Caco-2 (cell line): ENCODE measurements at regions of chr10 and their contacts with region 1.

Region 1: GRCh38 chr10:97334370-97335175 is at the start of gene FRAT2:
- DNase-seq: peak; percentile 91 to 93
- H3K4me3 ChIP-seq: peak within 1 kb of the TSS; percentile 99
- H3K4me3 Mint-ChIP-seq: peak within 1 kb of the TSS; percentile 78
- H3K27ac Mint-ChIP-seq: peak within 1 kb of the TSS; percentile 92
- H3K4me1 ChIP-seq: peaks cover 21% of the 10 kb centered on the region
- H3K4me1 Mint-ChIP-seq: peaks cover 27% of the 10 kb centered on the region
- H3K27me3 ChIP-seq: no peaks in the 10 kb centered on the region
- H3K27me3 Mint-ChIP-seq: no peaks in the 10 kb centered on the region
- CTCF ChIP-seq: no peak
- total RNA-seq, gene FRAT2: 16.6 and 18.8 TPM in 2 replicates

Region 2: GRCh38 chr10:97255512-97256293 is 78.9 kb before region 1 on chr10:
- CTCF ChIA-PET with region 1: no interaction called
- POLR2A ChIA-PET with region 1: no interaction called
- intact Hi-C with region 1: no loop called
- DNase-seq: no peak
- H3K4me3 ChIP-seq: no peak overlapping the region
- H3K4me3 Mint-ChIP-seq: no peak overlapping the region
- H3K27ac Mint-ChIP-seq: no peak overlapping the region
- H3K4me1 ChIP-seq: peaks cover 9% of the 10 kb centered on the region
- H3K4me1 Mint-ChIP-seq: peaks cover 6% of the 10 kb centered on the region
- H3K27me3 ChIP-seq: no peaks in the 10 kb centered on the region
- H3K27me3 Mint-ChIP-seq: no peaks in the 10 kb centered on the region
- CTCF ChIP-seq: no peak

Region 3: GRCh38 chr10:97278491-97278989 is 56.0 kb before region 1 on chr10:
- CTCF ChIA-PET with region 1: interaction called, 16 read pairs
- POLR2A ChIA-PET with region 1: no interaction called
- intact Hi-C with region 1: loop called (anchors 2 kb)
- DNase-seq: peak in 1 of 2 experiments; percentile 21
- H3K4me3 ChIP-seq: no peak overlapping the region
- H3K4me3 Mint-ChIP-seq: no peak overlapping the region
- H3K27ac Mint-ChIP-seq: no peak overlapping the region
- H3K4me1 ChIP-seq: 0 out of 2 replicates have a peak, but pooled peaks cover 4% of the 10 kb centered on the region
- H3K4me1 Mint-ChIP-seq: no peaks in the 10 kb centered on the region
- H3K27me3 ChIP-seq: no peaks in the 10 kb centered on the region
- H3K27me3 Mint-ChIP-seq: no peaks in the 10 kb centered on the region
- CTCF ChIP-seq: peak; percentile 54 to 59

Region 4: DNA sequence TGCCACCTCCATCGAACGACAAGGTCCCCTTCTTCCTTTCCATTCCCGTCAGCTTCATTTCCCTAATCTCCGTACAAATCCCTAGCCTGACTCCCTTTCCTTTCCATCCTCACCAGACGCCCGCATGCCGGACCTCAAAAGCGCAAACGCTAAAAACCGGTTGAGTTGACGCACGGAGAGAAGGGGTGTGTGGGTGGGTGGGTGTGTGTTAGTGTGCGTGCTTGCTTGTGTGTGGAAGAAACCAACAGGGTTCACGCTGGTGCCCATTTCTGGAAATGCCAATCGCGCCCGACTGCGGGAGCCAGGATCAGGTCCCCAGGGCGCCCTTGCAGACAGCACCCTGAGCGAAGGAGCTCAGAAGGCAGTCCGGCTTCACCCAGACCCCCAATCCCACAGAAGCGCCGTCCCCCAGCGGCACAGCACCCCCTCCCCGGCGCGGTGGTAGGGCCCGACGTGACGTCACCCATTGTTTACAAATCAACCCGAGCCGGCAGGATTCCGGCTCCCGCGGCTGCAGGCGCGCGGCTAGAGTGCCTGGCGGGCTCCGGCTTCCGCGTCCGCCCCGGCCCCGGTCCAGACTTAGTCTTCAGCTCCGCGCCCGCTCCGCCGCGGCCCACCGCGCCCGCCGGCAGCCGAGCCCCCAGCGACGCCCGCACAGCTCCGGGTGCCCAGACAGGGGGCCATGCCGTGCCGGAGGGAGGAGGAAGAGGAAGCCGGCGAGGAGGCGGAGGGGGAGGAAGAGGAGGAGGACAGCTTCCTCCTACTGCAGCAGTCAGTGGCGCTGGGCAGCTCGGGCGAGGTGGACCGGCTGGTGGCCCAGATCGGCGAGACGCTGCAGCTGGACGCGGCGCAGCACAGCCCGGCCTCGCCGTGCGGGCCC is 15.6 kb before region 1 on chr10 and contains the start of gene FRAT1:
- CTCF ChIA-PET with region 1: no interaction called
- POLR2A ChIA-PET with region 1: no interaction called
- intact Hi-C with region 1: loop called (anchors 2 kb)
- DNase-seq: peak; percentile 89 to 92
- H3K4me3 ChIP-seq: peak within 1 kb of the TSS; percentile 94
- H3K4me3 Mint-ChIP-seq: peak within 1 kb of the TSS; percentile 86
- H3K27ac Mint-ChIP-seq: peak within 1 kb of the TSS; percentile 99
- H3K4me1 ChIP-seq: peaks cover 4% of the 10 kb centered on the region
- H3K4me1 Mint-ChIP-seq: peaks cover 7% of the 10 kb centered on the region
- H3K27me3 ChIP-seq: no peaks in the 10 kb centered on the region
- H3K27me3 Mint-ChIP-seq: peaks cover 3% of the 10 kb centered on the region
- CTCF ChIP-seq: no peak
- total RNA-seq, gene FRAT1: 2.3 and 2.9 TPM in 2 replicates